ENCODE measurements at regions of chr15 and their contacts with region 1.

Region 1: DNA sequence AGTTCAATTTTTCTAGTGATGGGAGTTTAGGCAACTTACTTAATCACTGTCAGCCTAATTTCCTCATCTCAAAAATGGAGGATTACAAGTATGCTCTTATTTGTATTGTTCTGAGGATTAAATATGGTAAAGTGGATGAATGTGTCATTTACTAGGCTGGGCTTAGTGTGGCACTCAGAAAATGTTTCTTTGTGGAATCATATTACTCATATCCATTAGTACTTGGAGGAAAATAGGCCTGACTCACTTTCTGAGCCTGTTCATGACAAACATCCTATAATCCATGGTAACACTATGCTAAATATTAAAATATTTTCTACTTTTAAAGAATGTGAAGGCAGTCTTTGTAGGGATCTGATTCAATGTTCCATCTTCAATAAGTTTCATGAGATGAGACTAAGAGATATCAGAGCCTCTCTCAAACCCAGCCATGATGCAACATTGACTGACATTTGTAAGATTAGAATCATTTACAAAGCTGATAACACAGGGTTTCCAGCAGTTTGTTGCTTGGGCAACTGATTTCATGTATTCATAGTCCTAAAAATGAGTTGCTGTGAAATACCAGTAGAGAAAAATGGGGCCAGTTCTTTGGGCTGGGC is 1048.5 kb downstream of the NTRK3 start:
- DNase-seq: no peak
- ATAC-seq: no peak
- H3K4me3 ChIP-seq: no peak overlapping the region
- H3K27ac ChIP-seq: no peak overlapping the region
- H3K4me1 ChIP-seq: no peaks in the 10 kb centered on the region
- H3K27me3 ChIP-seq: no peaks in the 10 kb centered on the region
- CTCF ChIP-seq: no peak
- POLR2A ChIP-seq: no peak

Region 2: DNA sequence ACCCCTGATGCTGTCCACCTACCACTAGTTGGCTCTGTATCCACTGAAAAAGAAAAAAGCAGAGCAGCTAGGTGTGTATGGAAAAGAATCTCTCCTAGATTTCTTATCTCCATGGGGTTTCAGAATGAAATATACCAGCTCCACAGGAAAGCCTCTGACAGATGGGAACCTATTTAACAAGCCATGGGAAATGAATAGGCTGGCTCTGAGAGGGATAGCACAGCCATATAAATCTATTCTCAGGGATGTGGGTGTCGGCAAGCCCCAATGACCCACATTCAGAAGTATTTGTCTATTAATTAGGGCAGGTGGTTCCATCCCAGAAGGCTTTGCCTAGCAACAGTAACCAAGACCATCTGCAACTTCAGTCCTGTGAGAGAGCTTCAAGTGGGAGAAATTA is 434.3 kb before region 1 on chr15:
- in situ Hi-C with region 1: no loop called
- intact Hi-C with region 1: no loop called
- DNase-seq: no peak
- ATAC-seq: no peak
- H3K4me3 ChIP-seq: no peak overlapping the region
- H3K27ac ChIP-seq: no peak overlapping the region
- H3K4me1 ChIP-seq: no peaks in the 10 kb centered on the region
- H3K27me3 ChIP-seq: no peaks in the 10 kb centered on the region
- CTCF ChIP-seq: no peak
- POLR2A ChIP-seq: no peak

Region 3: GRCh38 chr15:87193481-87193880 is 14.6 kb before region 1 on chr15:
- in situ Hi-C with region 1: no loop called
- intact Hi-C with region 1: no loop called
- DNase-seq: no peak
- ATAC-seq: no peak
- H3K4me3 ChIP-seq: no peak overlapping the region
- H3K27ac ChIP-seq: no peak overlapping the region
- H3K4me1 ChIP-seq: no peaks in the 10 kb centered on the region
- H3K27me3 ChIP-seq: no peaks in the 10 kb centered on the region
- CTCF ChIP-seq: no peak
- POLR2A ChIP-seq: no peak

Region 4: DNA sequence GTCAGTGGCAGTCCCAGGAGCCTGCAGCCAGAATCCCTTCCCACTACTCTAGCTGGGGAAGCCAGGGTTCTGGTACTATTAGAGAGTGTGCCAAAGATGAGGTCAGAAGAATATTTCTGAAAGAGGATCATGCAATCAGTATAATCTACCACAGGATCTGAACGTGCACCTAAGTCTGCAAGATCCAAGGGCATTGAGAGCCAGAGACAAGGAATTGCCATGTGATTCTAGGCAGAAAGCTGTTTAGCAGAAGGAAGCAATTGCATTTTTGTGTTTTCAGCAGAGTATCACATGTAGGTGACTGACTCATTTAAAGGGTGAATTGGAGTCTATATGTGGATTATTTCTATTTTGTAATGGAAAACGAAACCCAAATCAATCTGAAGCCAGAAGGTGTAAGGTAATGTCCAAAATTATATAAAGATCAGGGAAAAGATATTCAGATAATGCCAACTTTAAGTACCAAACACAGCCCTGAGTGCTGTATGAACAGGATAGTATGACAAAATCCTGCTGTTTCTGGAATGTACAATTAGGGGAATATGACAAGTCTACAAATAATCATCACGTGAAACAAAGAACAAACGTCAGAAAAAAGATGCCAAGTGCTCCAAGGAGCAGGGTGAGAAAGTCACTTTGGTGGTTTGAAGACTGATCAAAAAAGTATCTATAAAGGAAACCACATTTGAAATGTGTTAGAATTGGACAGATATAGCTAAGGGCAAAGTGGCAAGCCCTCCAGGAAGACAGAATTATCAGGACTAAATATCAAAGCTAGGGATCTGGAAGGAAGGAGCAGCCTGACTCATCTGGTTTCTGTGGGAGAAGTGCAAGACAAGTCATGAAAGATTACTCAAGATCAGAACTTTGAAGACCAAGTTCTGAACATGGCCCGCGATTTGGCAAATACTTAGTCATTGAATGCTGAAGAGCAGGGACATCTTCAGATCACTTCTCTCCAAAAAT is 11.9 kb after region 1 on chr15:
- in situ Hi-C with region 1: no loop called
- intact Hi-C with region 1: loop called (anchors 1 kb)
- DNase-seq: no peak
- ATAC-seq: no peak
- H3K4me3 ChIP-seq: no peak overlapping the region
- H3K27ac ChIP-seq: no peak overlapping the region
- H3K4me1 ChIP-seq: no peaks in the 10 kb centered on the region
- H3K27me3 ChIP-seq: no peaks in the 10 kb centered on the region
- CTCF ChIP-seq: no peak
- POLR2A ChIP-seq: no peak